Naive thymus-derived CD4-positive, alpha-beta T cell (primary cell): ENCODE measurements at regions of chr5 and their contacts with region 1.

Region 1: DNA sequence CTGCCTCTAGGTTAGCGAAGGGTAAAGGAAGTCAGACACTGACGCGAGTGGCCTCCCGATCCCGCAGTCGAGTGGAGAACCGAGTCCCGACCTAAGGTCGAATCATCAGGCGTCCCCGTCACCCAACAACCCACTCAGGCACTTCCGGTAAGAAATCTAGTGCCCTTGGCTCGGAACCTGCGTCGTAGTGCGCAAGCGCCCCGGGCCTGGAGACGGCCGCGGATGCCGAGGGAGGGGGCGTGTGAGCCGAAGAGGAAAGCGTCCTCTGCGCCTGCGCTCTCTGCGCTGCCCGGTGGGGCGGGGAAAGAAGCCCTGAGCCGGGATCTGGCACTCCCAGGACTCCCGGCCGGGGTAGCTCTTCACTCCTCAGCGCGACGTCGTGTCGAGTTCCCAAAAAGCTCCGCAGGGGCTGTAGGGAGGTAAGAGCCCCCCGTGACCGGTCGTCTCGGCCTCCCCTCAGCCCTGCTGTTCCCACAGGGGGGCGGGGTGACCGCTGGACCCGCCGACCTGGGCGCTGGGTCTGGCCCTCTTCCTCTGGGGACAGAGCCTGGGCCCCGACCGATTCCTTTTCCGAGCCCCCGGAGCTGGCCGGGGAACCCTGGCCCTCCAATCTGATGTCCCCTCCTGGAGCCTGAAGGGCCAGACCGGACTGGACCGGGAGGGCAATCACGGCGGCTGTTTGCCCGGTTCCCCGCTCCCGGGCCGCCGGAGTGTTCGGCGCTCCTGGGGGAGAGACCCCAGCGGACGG is at the start of gene ZFYVE16:
- DNase-seq: peak; percentile 93 to 98 (median 94)
- ATAC-seq: peak; percentile 93
- H3K4me3 ChIP-seq: peak within 1 kb of the TSS; percentile 94
- H3K4me3 Mint-ChIP-seq: peak within 1 kb of the TSS; percentile 91 to 99 (median 96)
- H3K27ac ChIP-seq: peak within 1 kb of the TSS; percentile 85
- H3K27ac Mint-ChIP-seq: peak within 1 kb of the TSS; percentile 97 to 100 (median 99)
- H3K4me1 ChIP-seq: peaks cover 0 to 3% of the 10 kb centered on the region in 2 donors
- H3K4me1 Mint-ChIP-seq: peaks cover 20 to 32% (median 21%) of the 10 kb centered on the region in 7 donors
- H3K27me3 ChIP-seq: no peaks in the 10 kb centered on the region
- H3K27me3 Mint-ChIP-seq: peaks cover 0 to 7% (median 0%) of the 10 kb centered on the region in 5 donors
- total RNA-seq, gene ZFYVE16: 12.0 to 32.0 (median 26.0) TPM

Region 2: DNA sequence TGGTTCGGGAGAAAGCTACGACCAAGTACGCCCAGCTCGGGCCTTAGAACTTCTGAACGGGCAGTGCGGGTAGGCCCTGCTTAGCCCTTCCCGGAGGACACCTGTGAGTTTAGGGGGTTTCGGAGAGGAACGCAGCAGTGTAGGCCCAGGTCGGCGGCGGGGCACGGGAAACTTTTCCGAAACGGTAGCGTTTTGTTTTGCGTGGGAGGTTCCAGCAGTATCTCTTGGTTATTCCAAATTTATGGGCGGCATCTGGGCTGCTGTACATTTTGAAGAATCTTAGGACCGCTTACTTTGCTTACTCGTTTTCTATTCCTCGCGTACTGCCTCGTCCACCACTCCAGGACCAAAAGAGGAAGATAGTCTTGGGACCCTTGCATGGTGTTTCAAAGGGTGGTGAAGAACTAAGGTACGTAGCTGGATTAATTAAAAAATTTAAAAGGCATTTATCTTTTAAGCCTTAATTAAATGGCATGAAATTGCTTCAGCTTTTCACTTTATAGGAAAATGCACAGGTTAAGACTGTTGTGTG is 795.2 kb before region 1 on chr5:
- CTCF ChIA-PET with region 1: no interaction called
- POLR2A ChIA-PET with region 1: no interaction called
- intact Hi-C with region 1: loop called (anchors 1 kb)
- DNase-seq: no peak
- ATAC-seq: no peak
- H3K4me3 ChIP-seq: peak overlapping the region; percentile 84
- H3K4me3 Mint-ChIP-seq: peak overlapping the region; percentile 95 to 100 (median 97)
- H3K27ac ChIP-seq: peak overlapping the region; percentile 90
- H3K27ac Mint-ChIP-seq: peak overlapping the region; percentile 91 to 99 (median 98)
- H3K4me1 ChIP-seq: peaks cover 14 to 18% of the 10 kb centered on the region in 2 donors
- H3K4me1 Mint-ChIP-seq: peaks cover 25 to 58% (median 44%) of the 10 kb centered on the region in 7 donors
- H3K27me3 ChIP-seq: no peaks in the 10 kb centered on the region
- H3K27me3 Mint-ChIP-seq: peaks cover 0 to 6% (median 2%) of the 10 kb centered on the region in 5 donors

Region 3: DNA sequence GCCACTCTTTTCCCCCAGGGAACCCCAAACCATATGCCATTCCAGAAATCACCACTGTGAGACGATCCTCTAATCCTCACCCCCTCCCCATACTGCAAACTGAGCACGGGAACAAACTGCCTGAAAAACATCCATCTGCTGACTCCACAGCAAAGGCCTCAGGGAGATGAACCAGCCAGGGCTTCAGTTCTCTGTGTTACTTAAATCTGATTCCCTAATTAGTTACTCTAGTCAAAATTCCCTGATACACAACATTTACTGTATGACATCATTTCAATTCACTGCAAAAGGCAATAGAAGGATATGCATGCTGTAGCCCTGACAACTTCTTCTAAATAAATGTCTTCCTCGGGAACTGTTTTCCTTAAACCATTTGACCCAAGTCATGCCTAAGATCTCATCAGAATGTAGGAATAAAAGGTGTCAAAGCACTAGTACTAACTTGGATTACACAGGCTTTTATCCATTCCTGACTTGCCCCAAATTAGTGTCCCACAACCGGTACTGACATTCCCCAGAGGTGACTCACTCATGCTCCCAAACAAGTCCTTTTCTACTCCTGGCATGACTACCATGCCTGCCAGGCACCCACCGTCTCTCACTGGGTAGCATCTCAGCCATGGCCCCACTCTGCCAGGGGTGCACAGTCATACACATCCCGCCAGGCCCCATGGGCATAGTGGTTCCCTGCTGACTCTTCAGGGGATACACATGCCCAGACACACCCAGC is 451.8 kb before region 1 on chr5:
- CTCF ChIA-PET with region 1: no interaction called
- POLR2A ChIA-PET with region 1: no interaction called
- intact Hi-C with region 1: no loop called
- DNase-seq: no peak
- ATAC-seq: peak; percentile 16
- H3K4me3 ChIP-seq: no peak overlapping the region
- H3K4me3 Mint-ChIP-seq: no peak overlapping the region
- H3K27ac ChIP-seq: no peak overlapping the region
- H3K27ac Mint-ChIP-seq: no peak overlapping the region
- H3K4me1 ChIP-seq: no peaks in the 10 kb centered on the region
- H3K4me1 Mint-ChIP-seq: peaks cover 0 to 1% (median 0%) of the 10 kb centered on the region in 7 donors
- H3K27me3 ChIP-seq: no peaks in the 10 kb centered on the region
- H3K27me3 Mint-ChIP-seq: peaks cover 0 to 13% (median 4%) of the 10 kb centered on the region in 5 donors

Region 4: DNA sequence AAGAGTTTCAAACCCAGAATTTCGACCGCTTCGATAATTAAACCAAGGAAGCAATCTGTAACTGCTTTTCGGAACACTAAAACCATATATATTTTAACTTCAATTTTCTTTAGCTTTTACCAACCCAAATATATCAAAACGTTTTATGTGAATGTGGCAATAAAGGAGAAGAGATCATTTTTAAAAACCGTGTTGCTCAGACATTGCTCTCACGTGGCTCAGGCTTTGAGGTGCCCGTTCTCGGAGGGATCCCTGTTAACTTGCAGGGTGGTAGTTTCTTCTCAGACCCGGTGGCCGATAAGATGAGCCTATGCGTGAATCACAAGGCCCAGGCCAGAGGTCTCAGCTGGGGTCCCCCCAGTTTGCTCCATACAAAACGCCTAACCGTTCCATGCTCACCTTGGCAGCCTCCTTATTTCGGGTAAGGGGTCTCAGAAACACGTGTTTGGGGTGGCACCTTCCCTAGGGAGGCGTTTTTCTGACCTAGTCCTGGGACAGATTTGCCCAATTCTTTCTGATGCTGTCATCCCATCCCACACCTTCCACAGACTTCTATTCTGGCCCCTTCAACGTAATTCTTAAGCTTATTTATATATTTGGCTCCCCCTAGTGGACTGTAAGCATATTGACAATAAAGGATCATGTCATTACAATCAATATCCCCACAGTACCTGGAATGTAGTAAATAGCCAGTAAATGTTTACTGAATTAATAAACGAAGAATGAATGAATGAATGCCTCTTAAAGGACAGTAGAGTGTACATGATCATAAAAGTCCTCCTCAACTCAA is 324.6 kb before region 1 on chr5:
- CTCF ChIA-PET with region 1: no interaction called
- POLR2A ChIA-PET with region 1: no interaction called
- intact Hi-C with region 1: loop called in 1 of 2 experiments (anchors 5 kb)
- DNase-seq: peak; percentile 13 to 63 (median 50)
- ATAC-seq: peak; percentile 87
- H3K4me3 ChIP-seq: peak overlapping the region; percentile 6
- H3K4me3 Mint-ChIP-seq: peak overlapping the region; percentile 76 to 88 (median 82)
- H3K27ac ChIP-seq: peak overlapping the region; percentile 22
- H3K27ac Mint-ChIP-seq: peak overlapping the region; percentile 26 to 92 (median 62)
- H3K4me1 ChIP-seq: no peaks in the 10 kb centered on the region
- H3K4me1 Mint-ChIP-seq: peaks cover 6 to 17% (median 12%) of the 10 kb centered on the region in 7 donors
- H3K27me3 ChIP-seq: no peaks in the 10 kb centered on the region
- H3K27me3 Mint-ChIP-seq: peaks cover 0 to 3% (median 0%) of the 10 kb centered on the region in 5 donors

Region 5: DNA sequence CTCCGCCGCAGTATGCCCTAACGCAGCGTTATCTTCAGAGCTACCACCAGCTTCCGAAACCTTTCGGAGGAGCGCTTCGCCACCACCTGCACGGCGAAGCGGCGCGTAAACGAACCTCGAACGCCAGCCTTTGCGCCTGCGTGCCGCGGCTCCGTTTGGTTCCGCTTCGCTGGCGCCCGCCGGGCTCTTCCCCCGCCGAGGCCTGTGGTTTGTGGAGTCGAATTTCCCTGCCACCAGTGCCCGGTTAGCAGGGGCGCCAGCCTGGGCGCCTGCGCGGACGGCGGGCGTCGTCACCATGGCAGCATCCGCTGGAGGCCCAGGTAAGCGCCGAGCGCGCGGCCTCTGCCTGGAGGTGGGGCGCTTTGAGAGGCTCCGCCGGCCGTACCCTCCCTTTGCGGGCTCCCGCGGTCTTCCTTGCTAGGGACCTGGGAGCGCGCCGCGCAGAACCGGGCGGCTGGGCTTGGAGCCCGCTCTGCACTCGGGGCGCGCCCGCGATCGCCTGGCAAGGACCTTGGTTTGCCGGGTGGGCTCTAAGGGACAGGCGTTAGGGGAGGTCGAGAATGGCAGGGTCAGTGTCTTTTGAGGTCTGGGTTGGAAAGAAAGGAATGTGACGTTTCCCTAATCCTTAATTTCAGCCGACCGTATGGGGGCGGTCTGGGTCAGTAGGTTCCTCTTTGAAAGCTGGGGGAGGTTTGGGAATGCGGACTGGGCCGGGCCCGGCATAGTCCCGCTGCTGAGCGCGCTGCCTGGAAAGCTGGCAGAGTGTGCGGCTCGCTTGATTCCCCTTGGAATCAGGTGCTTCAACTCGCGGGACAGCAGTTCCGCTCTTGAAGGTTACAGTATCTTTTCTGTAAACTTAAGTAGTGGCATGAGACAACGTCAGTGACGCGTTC is 80.2 kb after region 1 on chr5 and contains the start of gene FAM151B:
- CTCF ChIA-PET with region 1: interaction called, 5 read pairs
- POLR2A ChIA-PET with region 1: interaction called, 3 read pairs
- intact Hi-C with region 1: loop called (anchors 1 to 5 kb)
- DNase-seq: peak; percentile 58 to 86 (median 79)
- ATAC-seq: peak; percentile 90
- H3K4me3 ChIP-seq: peak within 1 kb of the TSS; percentile 71
- H3K4me3 Mint-ChIP-seq: peak within 1 kb of the TSS; percentile 83 to 92 (median 88)
- H3K27ac ChIP-seq: peak within 1 kb of the TSS; percentile 52
- H3K27ac Mint-ChIP-seq: peak within 1 kb of the TSS; percentile 47 to 88 (median 72)
- H3K4me1 ChIP-seq: peaks cover 0 to 7% of the 10 kb centered on the region in 2 donors
- H3K4me1 Mint-ChIP-seq: peaks cover 9 to 27% (median 14%) of the 10 kb centered on the region in 7 donors
- H3K27me3 ChIP-seq: no peaks in the 10 kb centered on the region
- H3K27me3 Mint-ChIP-seq: peaks cover 0 to 36% (median 7%) of the 10 kb centered on the region in 5 donors
- total RNA-seq, gene FAM151B: 0.36 to 3.4 (median 1.1) TPM in 4 of 5 experiments, not detected in the other

Region 6: GRCh38 chr5:81006947-81007636 is 599.2 kb after region 1 on chr5:
- CTCF ChIA-PET with region 1: no interaction called
- POLR2A ChIA-PET with region 1: no interaction called
- intact Hi-C with region 1: loop called in 1 of 2 experiments (anchors 5 kb)
- DNase-seq: peak in 8 of 9 donors; percentile 48 to 91 (median 88)
- ATAC-seq: peak; percentile 95
- H3K4me3 ChIP-seq: peak overlapping the region; percentile 53
- H3K4me3 Mint-ChIP-seq: peak overlapping the region; percentile 75 to 95 (median 89)
- H3K27ac ChIP-seq: peak overlapping the region; percentile 80
- H3K27ac Mint-ChIP-seq: peak overlapping the region; percentile 92 to 100 (median 95)
- H3K4me1 ChIP-seq: peaks cover 35 to 64% of the 10 kb centered on the region in 2 donors
- H3K4me1 Mint-ChIP-seq: peaks cover 45 to 93% (median 80%) of the 10 kb centered on the region in 7 donors
- H3K27me3 ChIP-seq: no peaks in the 10 kb centered on the region
- H3K27me3 Mint-ChIP-seq: no peaks in the 10 kb centered on the region

Region 7: DNA sequence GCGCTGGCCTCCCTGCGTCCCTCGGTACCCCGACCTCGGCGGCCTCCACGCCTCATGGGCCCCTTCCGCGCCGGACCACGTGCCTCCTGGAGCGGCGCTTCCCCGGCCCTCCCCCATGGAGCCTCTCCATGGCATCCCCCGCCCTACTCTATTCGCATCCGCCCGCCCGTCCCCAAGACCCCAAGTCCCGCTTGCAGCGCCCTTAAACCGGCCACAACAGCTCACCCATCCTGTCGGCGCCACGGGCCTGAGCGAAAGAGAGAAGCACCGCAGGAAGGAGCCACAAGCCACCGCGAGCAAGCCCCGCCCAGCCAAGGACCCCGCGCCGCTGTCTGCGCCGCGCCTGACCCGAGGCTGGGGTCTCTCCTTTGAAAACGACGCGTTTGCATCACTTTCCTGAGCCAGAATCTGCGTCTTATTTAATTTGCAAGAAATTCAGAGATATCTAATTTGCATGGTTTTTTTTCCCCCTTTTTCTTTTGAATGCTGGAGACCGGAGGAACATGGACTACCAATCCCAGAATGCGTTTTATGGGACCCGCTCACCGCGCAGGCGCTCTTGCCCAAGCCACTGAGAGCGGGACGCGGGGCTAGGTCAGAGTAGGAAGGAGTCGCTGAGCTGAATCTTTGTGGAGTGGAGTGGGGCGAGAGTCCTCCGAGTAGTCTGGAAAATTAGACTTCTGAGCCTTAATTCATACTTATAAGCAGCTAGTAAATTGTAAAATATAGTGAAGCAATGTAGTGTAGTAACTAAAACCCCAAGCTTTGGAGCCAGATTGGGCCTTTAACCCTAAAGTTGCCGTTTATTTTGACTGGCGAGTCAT is 1870.4 kb after region 1 on chr5 and contains the start of gene RPS23:
- CTCF ChIA-PET with region 1: no interaction called
- POLR2A ChIA-PET with region 1: no interaction called
- intact Hi-C with region 1: loop called (anchors 2 to 5 kb)
- DNase-seq: peak; percentile 78 to 90 (median 85)
- ATAC-seq: peak; percentile 96
- H3K4me3 ChIP-seq: peak within 1 kb of the TSS; percentile 72
- H3K4me3 Mint-ChIP-seq: peak within 1 kb of the TSS; percentile 87 to 98 (median 94)
- H3K27ac ChIP-seq: peak within 1 kb of the TSS; percentile 80
- H3K27ac Mint-ChIP-seq: peak within 1 kb of the TSS; percentile 94 to 99 (median 96)
- H3K4me1 ChIP-seq: peaks cover 12 to 16% of the 10 kb centered on the region in 2 donors
- H3K4me1 Mint-ChIP-seq: peaks cover 13 to 65% (median 39%) of the 10 kb centered on the region in 7 donors
- H3K27me3 ChIP-seq: no peaks in the 10 kb centered on the region
- H3K27me3 Mint-ChIP-seq: no peaks in the 10 kb centered on the region
- total RNA-seq, gene RPS23: 2,233 to 4,335 (median 3,874) TPM